Panc1 (cell line): ENCODE measurements at regions of chr1 and their contacts with region 1.

Region 1: GRCh38 chr1:168148916-168149315 is 12.2 kb upstream of the GPR161 start:
- DNase-seq: no peak
- ATAC-seq: no peak
- H3K4me3 ChIP-seq: no peak overlapping the region
- H3K27ac ChIP-seq: no peak overlapping the region
- H3K4me1 ChIP-seq: no peaks in the 10 kb centered on the region
- H3K27me3 ChIP-seq: no peaks in the 10 kb centered on the region; the same call in 1 of the 2 replicates
- CTCF ChIP-seq: no peak

Region 2: GRCh38 chr1:168032029-168032428 is 116.9 kb before region 1 on chr1:
- CTCF ChIA-PET with region 1: no interaction called
- POLR2A ChIA-PET with region 1: no interaction called
- in situ Hi-C with region 1: no loop called
- intact Hi-C with region 1: no loop called
- DNase-seq: no peak
- ATAC-seq: no peak
- H3K4me3 ChIP-seq: no peak overlapping the region
- H3K27ac ChIP-seq: no peak overlapping the region
- H3K4me1 ChIP-seq: no peaks in the 10 kb centered on the region
- H3K27me3 ChIP-seq: no peaks in the 10 kb centered on the region
- CTCF ChIP-seq: no peak

Region 3: DNA sequence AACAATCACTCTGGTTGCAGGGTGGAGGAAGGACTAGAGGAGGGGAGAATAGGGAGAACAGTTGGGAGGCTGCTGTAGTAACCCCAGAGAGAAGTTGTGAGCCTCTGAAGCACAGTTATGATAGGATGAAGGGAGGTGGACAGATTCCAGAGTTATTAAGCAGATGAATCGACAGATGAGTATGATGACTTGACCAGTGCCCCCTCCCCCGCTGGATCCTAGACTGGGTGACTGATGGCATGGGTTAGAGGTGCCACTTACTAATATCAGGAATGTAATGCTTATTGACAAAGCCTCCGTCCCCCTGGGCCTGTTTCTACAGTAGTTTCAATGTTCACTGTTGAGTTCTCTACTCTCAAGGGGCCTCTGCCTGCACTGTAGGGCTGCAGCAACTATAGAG is 15.9 kb after region 1 on chr1:
- CTCF ChIA-PET with region 1: no interaction called
- POLR2A ChIA-PET with region 1: interaction called, 10 read pairs
- in situ Hi-C with region 1: no loop called
- intact Hi-C with region 1: no loop called
- DNase-seq: no peak
- ATAC-seq: no peak
- H3K4me3 ChIP-seq: no peak overlapping the region
- H3K27ac ChIP-seq: no peak overlapping the region
- H3K4me1 ChIP-seq: no peaks in the 10 kb centered on the region
- H3K27me3 ChIP-seq: no peaks in the 10 kb centered on the region
- CTCF ChIP-seq: no peak